Panc1 (cell line): ENCODE measurements at regions of chr6 and their contacts with region 1.

Region 1: DNA sequence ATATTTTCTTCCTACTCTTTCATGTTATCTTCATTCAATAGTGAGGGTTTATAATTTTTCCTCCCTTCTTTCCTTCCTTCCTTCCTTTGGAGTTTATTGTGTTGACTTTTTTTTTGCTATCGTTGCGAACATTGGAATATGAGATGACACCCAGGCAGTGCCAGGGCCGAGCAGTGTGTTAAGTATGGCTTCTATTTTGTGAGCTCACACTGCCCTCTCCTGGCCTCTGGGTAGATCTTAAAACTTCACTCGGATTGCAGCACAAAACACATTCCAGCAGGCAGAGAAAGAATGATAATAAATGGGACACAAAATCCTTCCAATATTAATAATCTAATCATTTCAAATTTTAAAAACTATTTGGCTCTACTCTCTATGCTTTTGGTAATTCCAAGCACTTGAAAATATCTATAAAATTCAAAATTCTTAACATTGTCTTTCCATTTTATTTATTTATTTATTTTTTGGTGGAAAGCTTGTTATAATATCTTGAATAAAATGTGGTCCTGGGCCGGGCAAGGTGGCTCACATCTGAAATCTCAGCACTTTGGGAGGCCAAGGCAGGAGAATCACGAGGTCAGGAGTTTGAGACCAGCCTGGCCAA is 147.4 kb upstream of the OLIG3 start:
- DNase-seq: peak; percentile 32
- ATAC-seq: peak; percentile 99
- H3K4me3 ChIP-seq: no peak overlapping the region
- H3K27ac ChIP-seq: no peak overlapping the region
- H3K4me1 ChIP-seq: no peaks in the 10 kb centered on the region
- H3K27me3 ChIP-seq: no peaks in the 10 kb centered on the region
- CTCF ChIP-seq: peak; percentile 81

Region 2: GRCh38 chr6:137094411-137095008 is 547.1 kb before region 1 on chr6:
- CTCF ChIA-PET with region 1: interaction called, 3 read pairs
- POLR2A ChIA-PET with region 1: no interaction called
- in situ Hi-C with region 1: no loop called
- intact Hi-C with region 1: loop called (anchors 5 kb)
- DNase-seq: peak; percentile 46
- ATAC-seq: no peak
- H3K4me3 ChIP-seq: no peak overlapping the region
- H3K27ac ChIP-seq: no peak overlapping the region
- H3K4me1 ChIP-seq: no peaks in the 10 kb centered on the region
- H3K27me3 ChIP-seq: no peaks in the 10 kb centered on the region; the same call in 1 of the 2 replicates
- CTCF ChIP-seq: peak; percentile 80; the same call in 1 of the 2 replicates

Region 3: DNA sequence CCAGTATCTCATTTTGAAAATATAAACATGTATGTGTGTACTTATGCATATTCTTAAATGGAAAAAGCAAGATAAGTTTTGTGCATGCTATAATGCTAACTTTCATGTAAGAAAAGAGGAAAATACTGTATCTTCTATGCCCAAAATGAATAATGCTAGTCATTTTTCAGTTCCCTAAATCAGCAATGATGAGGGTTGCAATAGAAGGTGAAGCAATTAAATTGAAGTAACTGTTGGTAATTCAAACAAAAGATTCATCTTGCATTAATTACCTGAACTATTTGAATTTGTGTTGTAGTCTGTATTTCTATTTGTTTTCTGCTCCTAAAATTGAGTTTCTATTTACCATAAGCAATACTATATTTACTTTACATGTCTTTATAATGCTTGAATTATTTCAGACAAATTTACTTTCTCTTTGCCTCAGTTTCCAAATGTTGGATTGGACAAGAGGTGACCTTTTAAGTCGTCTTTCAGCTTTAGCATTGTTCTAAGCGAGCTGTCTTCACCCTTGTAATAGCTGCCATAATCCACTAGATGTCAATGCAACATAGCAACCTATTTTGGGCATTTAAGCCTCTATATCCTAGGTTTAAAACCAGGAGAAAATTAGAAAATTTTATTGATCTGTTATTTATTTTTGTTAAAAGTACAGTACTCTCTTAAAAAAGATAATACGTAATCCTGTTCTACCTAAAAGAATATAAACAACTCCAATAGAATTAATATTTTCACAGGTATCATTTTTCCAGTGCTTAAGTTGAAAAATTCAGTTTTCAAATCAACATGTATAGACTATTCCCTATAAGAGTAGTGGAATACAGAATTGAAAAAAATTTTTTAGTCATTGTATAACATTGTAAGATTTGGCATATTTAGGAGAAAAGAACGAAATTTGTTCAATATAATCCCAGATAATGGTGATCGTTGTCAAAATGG is 370.1 kb before region 1 on chr6:
- CTCF ChIA-PET with region 1: no interaction called
- POLR2A ChIA-PET with region 1: no interaction called
- in situ Hi-C with region 1: no loop called
- intact Hi-C with region 1: loop called (anchors 1 kb)
- DNase-seq: peak; percentile 42
- ATAC-seq: peak; percentile 86
- H3K4me3 ChIP-seq: no peak overlapping the region
- H3K27ac ChIP-seq: no peak overlapping the region
- H3K4me1 ChIP-seq: no peaks in the 10 kb centered on the region
- H3K27me3 ChIP-seq: no peaks in the 10 kb centered on the region
- CTCF ChIP-seq: peak; percentile 86; the same call in 1 of the 2 replicates

Region 4: GRCh38 chr6:137277971-137278637 is 363.5 kb before region 1 on chr6:
- CTCF ChIA-PET with region 1: interaction called, 10 read pairs
- POLR2A ChIA-PET with region 1: no interaction called
- in situ Hi-C with region 1: no loop called
- intact Hi-C with region 1: no loop called
- DNase-seq: peak; percentile 8
- ATAC-seq: peak; percentile 58; the same call in 1 of the 2 replicates
- H3K4me3 ChIP-seq: no peak overlapping the region
- H3K27ac ChIP-seq: no peak overlapping the region
- H3K4me1 ChIP-seq: no peaks in the 10 kb centered on the region
- H3K27me3 ChIP-seq: no peaks in the 10 kb centered on the region; the same call in 1 of the 2 replicates
- CTCF ChIP-seq: no peak

Region 5: GRCh38 chr6:137341681-137342195 is 299.8 kb before region 1 on chr6:
- CTCF ChIA-PET with region 1: no interaction called
- POLR2A ChIA-PET with region 1: no interaction called
- in situ Hi-C with region 1: no loop called
- intact Hi-C with region 1: loop called (anchors 2 kb)
- DNase-seq: no peak
- ATAC-seq: peak; percentile 68
- H3K4me3 ChIP-seq: no peak overlapping the region
- H3K27ac ChIP-seq: no peak overlapping the region
- H3K4me1 ChIP-seq: no peaks in the 10 kb centered on the region; the same call in 1 of the 2 replicates
- H3K27me3 ChIP-seq: peaks cover 33% of the 10 kb centered on the region
- CTCF ChIP-seq: peak; percentile 49

Region 6: GRCh38 chr6:137610702-137611101 is 30.9 kb before region 1 on chr6:
- CTCF ChIA-PET with region 1: no interaction called
- POLR2A ChIA-PET with region 1: no interaction called
- in situ Hi-C with region 1: no loop called
- intact Hi-C with region 1: no loop called
- DNase-seq: no peak
- ATAC-seq: no peak
- H3K4me3 ChIP-seq: no peak overlapping the region
- H3K27ac ChIP-seq: no peak overlapping the region
- H3K4me1 ChIP-seq: no peaks in the 10 kb centered on the region
- H3K27me3 ChIP-seq: peaks cover under 1% of the 10 kb centered on the region
- CTCF ChIP-seq: no peak